ENCODE measurements at regions of chr2 and their contacts with region 1.

Region 1: DNA sequence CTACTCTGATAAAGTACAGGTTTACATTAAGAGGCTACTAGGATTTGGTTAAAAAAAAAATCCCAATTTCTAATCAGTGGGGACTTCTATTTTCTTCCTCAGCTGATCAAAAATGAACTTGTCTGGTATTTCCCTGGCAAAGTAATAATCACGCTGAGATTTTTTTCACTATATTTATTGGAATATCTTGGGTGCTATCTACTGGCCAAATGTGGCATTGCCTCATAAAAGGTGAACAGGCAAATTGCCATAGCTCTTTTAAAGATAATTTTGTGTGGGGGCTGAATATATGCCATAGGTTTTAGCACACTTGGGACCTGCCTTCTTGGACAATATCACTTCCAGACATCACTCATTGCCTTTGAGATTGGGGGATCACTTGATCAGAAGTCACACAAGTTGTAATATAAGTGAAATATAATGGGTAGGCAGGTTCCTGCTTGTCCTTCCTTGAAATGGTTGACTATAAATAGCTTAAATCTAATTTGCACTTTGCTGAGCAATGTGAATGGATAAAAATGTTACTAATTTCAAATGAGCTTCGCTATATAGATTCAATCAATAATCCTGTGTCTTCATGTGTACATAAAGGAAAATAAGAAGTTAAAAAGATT is 7.0 kb upstream of the NXPH2 start:
- DNase-seq: peak; percentile 29
- H3K4me3 ChIP-seq: no peak overlapping the region
- H3K27ac ChIP-seq: no peak overlapping the region
- H3K4me1 ChIP-seq: no peaks in the 10 kb centered on the region
- H3K27me3 ChIP-seq: no peaks in the 10 kb centered on the region
- CTCF ChIP-seq: peak; percentile 76 to 87

Region 2: GRCh38 chr2:137947728-137948336 is 839.3 kb before region 1 on chr2:
- CTCF ChIA-PET with region 1: interaction called, 4 read pairs
- dilution Hi-C with region 1: no loop called
- in situ Hi-C with region 1: no loop called
- intact Hi-C with region 1: loop called (anchors 5 kb)
- DNase-seq: peak; percentile 56
- H3K4me3 ChIP-seq: no peak overlapping the region
- H3K27ac ChIP-seq: no peak overlapping the region
- H3K4me1 ChIP-seq: no peaks in the 10 kb centered on the region
- H3K27me3 ChIP-seq: no peaks in the 10 kb centered on the region
- CTCF ChIP-seq: peak; percentile 55 to 74

Region 3: DNA sequence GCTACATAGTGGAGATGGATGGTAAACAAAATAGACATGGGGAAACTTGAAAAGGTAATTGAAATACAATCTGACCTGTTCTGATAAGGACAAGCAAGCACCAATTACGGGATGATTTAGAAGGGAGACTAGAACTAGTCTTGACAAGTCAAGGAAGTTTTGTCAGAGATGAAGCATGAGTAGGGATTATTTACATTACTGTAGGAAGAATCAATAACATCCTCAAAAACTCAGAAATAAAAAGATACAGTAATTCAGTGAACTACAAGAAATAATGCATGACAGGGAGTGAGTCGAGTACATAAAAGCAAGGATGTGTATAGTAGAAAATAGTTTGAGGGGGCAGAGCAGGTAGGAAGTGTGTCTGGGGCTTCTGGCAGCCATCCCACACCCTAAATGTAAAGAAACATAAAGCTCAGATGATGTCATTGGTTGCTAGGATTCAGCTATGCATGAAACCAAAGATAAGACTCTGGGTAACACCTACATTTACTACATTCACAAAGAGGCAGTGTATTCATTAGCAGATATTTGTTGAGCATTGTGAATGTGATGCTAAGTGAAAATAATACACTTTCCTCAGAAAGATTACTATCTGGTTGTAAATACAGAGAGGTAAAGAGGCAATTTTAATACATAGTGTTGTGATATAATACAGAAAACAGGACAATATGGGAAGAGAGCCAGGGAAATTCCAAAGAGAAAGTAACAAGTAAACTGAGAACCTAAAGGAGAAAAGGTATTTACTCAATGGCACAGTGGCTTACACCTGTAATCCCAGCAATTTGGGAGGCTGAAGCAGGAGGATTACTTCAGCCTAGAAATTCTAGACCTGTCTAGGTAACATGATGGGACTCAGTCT is 664.8 kb before region 1 on chr2:
- CTCF ChIA-PET with region 1: no interaction called
- dilution Hi-C with region 1: no loop called
- in situ Hi-C with region 1: loop called in 1 of 2 experiments (anchors 25 kb)
- intact Hi-C with region 1: no loop called
- DNase-seq: peak; percentile 81
- H3K4me3 ChIP-seq: no peak overlapping the region
- H3K27ac ChIP-seq: peak overlapping the region; percentile 84
- H3K4me1 ChIP-seq: peaks cover 25% of the 10 kb centered on the region
- H3K27me3 ChIP-seq: no peaks in the 10 kb centered on the region
- CTCF ChIP-seq: no peak

Region 4: GRCh38 chr2:138395565-138396306 is 391.4 kb before region 1 on chr2:
- CTCF ChIA-PET with region 1: no interaction called
- dilution Hi-C with region 1: no loop called
- in situ Hi-C with region 1: loop called in 1 of 2 experiments (anchors 25 kb)
- intact Hi-C with region 1: no loop called
- DNase-seq: peak; percentile 90
- H3K4me3 ChIP-seq: no peak overlapping the region
- H3K27ac ChIP-seq: peak overlapping the region; percentile 9
- H3K4me1 ChIP-seq: peaks cover 23% of the 10 kb centered on the region
- H3K27me3 ChIP-seq: no peaks in the 10 kb centered on the region
- CTCF ChIP-seq: no peak

Region 5: GRCh38 chr2:138564586-138565241 is 222.4 kb before region 1 on chr2:
- CTCF ChIA-PET with region 1: interaction called, 3 read pairs
- dilution Hi-C with region 1: no loop called
- in situ Hi-C with region 1: no loop called
- intact Hi-C with region 1: loop called (anchors 10 kb)
- DNase-seq: peak; percentile 31
- H3K4me3 ChIP-seq: no peak overlapping the region
- H3K27ac ChIP-seq: no peak overlapping the region
- H3K4me1 ChIP-seq: no peaks in the 10 kb centered on the region
- H3K27me3 ChIP-seq: no peaks in the 10 kb centered on the region
- CTCF ChIP-seq: no peak

Region 6: DNA sequence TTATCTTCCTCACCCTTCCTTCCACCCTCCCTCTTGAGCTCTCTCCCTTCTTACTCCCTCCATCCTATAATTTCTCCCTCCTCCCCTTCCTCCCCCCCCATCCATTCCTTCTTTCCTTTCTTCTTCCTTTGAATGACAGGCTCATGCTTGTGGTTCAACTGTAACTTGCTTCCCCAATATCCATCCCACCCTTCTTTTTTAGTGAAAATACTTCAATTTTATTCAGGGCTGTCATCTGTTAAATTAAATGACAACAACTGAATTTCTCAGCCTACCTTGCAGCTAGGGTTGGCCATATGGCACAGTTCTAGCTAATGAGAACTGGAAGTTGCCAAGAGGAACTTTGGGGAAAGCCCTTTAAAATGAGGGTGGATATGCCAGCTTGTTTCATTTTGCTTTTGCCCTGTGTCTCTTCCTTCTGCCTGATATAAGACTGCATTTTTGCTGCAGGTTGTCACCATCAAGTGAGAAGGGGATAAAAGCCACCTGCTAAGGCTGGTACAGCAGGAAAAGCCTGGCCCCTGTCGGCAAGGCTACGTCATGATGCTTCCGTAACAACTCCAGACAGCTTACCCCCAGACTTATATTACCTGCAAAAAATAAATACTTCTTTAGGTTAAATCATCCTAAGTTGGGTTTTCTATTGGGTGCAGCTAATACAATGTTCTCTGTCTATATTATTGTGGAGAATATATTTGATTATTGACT is 128.8 kb before region 1 on chr2:
- CTCF ChIA-PET with region 1: no interaction called
- dilution Hi-C with region 1: no loop called
- in situ Hi-C with region 1: no loop called
- intact Hi-C with region 1: no loop called
- DNase-seq: no peak
- H3K4me3 ChIP-seq: no peak overlapping the region
- H3K27ac ChIP-seq: no peak overlapping the region
- H3K4me1 ChIP-seq: no peaks in the 10 kb centered on the region
- H3K27me3 ChIP-seq: no peaks in the 10 kb centered on the region
- CTCF ChIP-seq: no peak